Activated CD8-positive, alpha-beta T cell treated with anti-CD3 and anti-CD28 coated beads for 36 hours (primary cell): ENCODE measurements at regions of chr3 and their contacts with region 1.

Region 1: DNA sequence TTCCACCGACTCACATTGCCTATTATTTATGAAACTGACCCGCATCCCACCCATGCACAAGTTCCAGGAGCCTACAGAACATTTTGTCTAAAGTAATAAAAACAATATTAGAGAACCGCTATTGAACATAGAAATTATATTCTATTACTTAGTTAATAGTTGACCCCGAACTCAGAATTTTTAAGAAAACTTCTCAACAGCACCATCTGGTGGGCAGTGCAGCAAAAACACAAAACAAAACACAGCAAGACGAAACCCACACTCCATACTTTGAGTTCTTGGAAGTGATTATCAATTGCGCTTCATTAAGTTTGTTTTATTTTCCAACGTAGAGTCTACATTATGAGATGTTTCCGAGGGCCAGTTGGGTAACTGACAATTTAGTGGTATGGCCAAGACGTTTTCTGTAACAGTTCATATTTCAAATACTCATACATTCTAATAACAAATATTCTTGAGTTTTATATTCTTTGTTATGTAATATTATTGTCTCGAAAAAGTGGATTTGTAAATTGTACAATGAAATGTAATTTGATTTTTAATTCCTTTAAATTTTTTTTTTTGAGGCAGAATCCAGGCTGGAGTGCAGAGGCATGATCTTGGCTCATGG is 24.0 kb upstream of the C3orf70 start:
- DNase-seq: peak; percentile 38
- ATAC-seq: no peak
- H3K4me3 Mint-ChIP-seq: no peak overlapping the region
- H3K27ac Mint-ChIP-seq: no peak overlapping the region
- H3K4me1 Mint-ChIP-seq: no peaks in the 10 kb centered on the region
- H3K27me3 Mint-ChIP-seq: peaks cover 5% of the 10 kb centered on the region
- CTCF ChIP-seq: peak; percentile 85

Region 2: DNA sequence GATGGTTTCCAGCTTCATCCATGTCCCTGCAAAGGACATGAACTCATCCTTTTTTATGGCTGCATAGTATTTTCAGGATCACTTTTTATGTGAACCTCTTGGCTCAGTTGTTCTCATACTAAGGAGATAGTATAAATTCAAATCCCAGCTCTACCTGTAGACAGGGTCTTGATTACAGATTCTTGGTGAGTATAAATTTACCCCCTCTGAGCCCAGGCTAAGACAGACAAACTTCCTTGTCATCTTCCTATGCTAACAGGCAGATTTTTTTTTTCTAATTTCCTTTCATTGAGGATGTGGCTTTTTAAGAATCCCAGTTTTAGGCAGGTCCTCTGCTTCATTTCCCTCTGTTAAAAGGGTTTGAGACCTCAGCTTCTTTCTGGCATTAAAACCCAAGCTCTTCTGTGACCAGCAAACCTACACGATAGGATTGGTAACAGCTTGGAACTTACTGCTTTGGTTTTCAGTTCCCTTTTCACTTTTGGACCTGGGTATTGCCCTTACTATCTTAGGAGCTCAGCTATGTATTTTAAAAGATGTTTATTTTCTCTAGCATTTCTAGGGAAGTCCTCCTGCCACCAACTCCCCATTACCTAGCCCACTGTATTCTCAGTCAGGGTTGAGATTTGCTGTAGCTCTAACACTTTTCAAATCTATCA is 292.4 kb before region 1 on chr3:
- CTCF ChIA-PET with region 1: interaction called, 3 read pairs
- POLR2A ChIA-PET with region 1: no interaction called
- intact Hi-C with region 1: loop called (anchors 5 kb)
- DNase-seq: no peak
- ATAC-seq: no peak
- H3K4me3 Mint-ChIP-seq: no peak overlapping the region
- H3K27ac Mint-ChIP-seq: no peak overlapping the region
- H3K4me1 Mint-ChIP-seq: no peaks in the 10 kb centered on the region
- H3K27me3 Mint-ChIP-seq: no peaks in the 10 kb centered on the region
- CTCF ChIP-seq: no peak

Region 3: GRCh38 chr3:184965639-184966430 is 211.0 kb before region 1 on chr3:
- CTCF ChIA-PET with region 1: no interaction called
- POLR2A ChIA-PET with region 1: no interaction called
- intact Hi-C with region 1: no loop called
- DNase-seq: peak; percentile 3
- ATAC-seq: peak; percentile 20
- H3K4me3 Mint-ChIP-seq: no peak overlapping the region
- H3K27ac Mint-ChIP-seq: no peak overlapping the region
- H3K4me1 Mint-ChIP-seq: peaks cover 13% of the 10 kb centered on the region
- H3K27me3 Mint-ChIP-seq: no peaks in the 10 kb centered on the region
- CTCF ChIP-seq: no peak

Region 4: GRCh38 chr3:185157347-185157746 is 19.5 kb before region 1 on chr3:
- CTCF ChIA-PET with region 1: interaction called, 11 read pairs
- POLR2A ChIA-PET with region 1: no interaction called
- intact Hi-C with region 1: no loop called
- DNase-seq: no peak
- ATAC-seq: no peak
- H3K4me3 Mint-ChIP-seq: no peak overlapping the region
- H3K27ac Mint-ChIP-seq: no peak overlapping the region
- H3K4me1 Mint-ChIP-seq: peaks cover 2% of the 10 kb centered on the region
- H3K27me3 Mint-ChIP-seq: peaks cover 16% of the 10 kb centered on the region
- CTCF ChIP-seq: no peak

Region 5: DNA sequence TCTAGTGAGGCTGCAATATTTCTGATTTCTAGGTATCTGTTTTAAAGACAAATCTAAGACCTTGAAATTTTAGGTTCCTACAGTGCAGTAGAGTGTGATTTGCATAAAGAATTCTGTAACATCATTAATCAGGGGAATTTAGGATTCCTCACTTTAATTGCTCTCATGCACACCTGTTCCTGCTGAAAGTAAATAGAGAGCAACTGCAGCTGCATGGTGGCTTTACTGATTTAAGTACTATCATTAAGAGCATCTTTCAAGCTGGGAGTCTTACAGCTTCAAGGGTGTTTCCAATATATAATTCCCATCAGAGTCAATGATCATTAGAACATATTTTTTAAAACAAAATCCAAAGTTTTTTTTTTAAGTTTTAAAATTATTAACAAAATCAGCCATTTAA is 12.0 kb after region 1 on chr3:
- CTCF ChIA-PET with region 1: interaction called, 10 read pairs
- POLR2A ChIA-PET with region 1: no interaction called
- intact Hi-C with region 1: no loop called
- DNase-seq: no peak
- ATAC-seq: no peak
- H3K4me3 Mint-ChIP-seq: no peak overlapping the region
- H3K27ac Mint-ChIP-seq: no peak overlapping the region
- H3K4me1 Mint-ChIP-seq: no peaks in the 10 kb centered on the region
- H3K27me3 Mint-ChIP-seq: peaks cover 6% of the 10 kb centered on the region
- CTCF ChIP-seq: no peak

Region 6: GRCh38 chr3:185199671-185200070 is 22.8 kb after region 1 on chr3:
- CTCF ChIA-PET with region 1: interaction called, 10 read pairs
- POLR2A ChIA-PET with region 1: no interaction called
- intact Hi-C with region 1: no loop called
- DNase-seq: no peak
- ATAC-seq: no peak
- H3K4me3 Mint-ChIP-seq: no peak overlapping the region
- H3K27ac Mint-ChIP-seq: no peak overlapping the region
- H3K4me1 Mint-ChIP-seq: no peaks in the 10 kb centered on the region
- H3K27me3 Mint-ChIP-seq: no peaks in the 10 kb centered on the region
- CTCF ChIP-seq: no peak